ENCODE measurements at regions of chrX and their contacts with region 1.

Region 1: DNA sequence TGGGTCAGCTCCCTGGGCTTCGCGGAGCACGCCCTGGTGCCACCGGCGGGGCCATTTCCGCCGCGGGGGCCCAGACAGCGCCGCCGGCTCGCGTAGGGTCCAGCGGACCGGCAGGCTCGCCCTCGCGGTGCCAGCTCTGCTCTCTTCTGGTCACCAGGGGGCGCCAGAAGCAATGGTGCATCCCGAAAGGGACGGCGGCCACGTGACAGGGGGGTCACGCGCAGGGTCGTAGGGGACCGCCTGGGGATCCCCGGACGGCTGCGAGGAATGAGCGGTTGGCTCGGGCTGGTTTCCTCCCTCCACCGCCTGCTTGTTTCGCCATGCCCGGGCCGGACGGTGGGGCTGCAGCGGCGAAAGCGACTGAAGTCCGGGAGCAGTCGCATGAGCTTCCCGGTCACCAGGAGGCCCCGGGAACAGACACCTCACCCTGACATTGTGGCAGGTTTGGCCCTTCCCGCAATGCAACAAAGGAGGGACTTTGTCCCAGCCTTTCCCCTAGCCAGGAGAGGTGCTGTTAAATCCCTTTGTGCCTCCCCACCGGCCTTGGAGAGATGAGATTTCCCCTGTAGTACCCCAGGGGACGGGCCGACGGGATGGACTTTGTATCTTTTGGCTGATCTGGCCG is 15.8 kb downstream of the ZCCHC12 start:
- DNase-seq: peak; percentile 62
- H3K4me3 ChIP-seq: peak overlapping the region; percentile 70
- H3K27ac ChIP-seq: no peak overlapping the region
- H3K4me1 ChIP-seq: no peaks in the 10 kb centered on the region
- H3K27me3 ChIP-seq: no peaks in the 10 kb centered on the region

Region 2: DNA sequence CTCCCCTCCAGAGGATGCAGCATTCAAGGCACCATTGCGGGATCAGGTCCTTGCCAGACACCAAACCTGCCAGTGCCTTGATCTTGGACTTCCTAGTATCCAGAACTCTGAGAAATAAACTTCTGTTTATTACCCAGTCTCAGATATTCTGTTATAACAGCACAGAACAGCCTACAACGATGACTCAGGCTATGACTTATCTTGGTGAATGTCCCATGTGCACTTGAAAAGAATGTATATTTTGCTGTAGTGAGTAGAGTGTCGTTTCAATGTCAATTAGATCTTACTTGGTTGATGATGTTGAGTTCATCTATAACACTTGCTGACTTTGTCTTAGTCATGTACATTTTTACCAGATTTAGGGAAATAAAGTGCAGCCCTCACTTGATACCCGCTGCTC is 362.1 kb after region 1 on chrX:
- in situ Hi-C with region 1: loop called (anchors 25 kb)
- DNase-seq: peak; percentile 62
- H3K4me3 ChIP-seq: no peak overlapping the region
- H3K27ac ChIP-seq: no peak overlapping the region
- H3K4me1 ChIP-seq: no peaks in the 10 kb centered on the region
- H3K27me3 ChIP-seq: no peaks in the 10 kb centered on the region